ENCODE measurements at regions of chr16 and their contacts with region 1.

Region 1: DNA sequence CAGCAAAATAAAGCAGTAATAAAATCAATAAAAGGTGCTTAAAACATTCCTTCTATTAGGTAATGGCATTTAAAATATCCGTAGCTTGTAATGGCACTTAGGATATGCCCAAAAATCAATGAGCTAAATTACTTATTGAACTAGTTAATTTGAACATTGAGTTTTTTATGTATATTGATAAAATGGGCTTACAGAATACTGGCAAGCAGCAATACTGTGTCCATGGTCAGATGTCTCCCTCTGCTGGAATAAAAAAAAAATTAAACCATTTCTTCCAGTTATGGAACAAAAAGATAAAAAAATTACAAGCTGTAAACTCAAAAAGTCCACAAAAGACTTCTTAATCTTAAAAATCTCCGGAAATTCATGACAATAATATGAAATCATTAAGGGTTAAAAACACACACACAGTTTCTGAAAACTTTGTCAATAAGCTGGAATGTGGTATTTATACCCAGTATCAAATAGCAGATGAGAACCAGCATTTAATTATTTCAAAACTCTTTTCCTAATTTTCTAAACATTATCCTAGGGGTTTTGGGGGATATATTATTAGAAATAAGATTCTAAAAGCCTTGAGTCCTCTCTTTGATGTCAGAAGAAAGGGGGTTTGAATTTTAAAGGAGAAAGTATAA is 21.5 kb upstream of the PSMD7 start:
- DNase-seq: peak; percentile 13
- ATAC-seq: peak; percentile 44; the same call in 1 of the 2 replicates
- H3K4me3 ChIP-seq: no peak overlapping the region
- H3K27ac ChIP-seq: no peak overlapping the region
- H3K4me1 ChIP-seq: no peaks in the 10 kb centered on the region
- H3K27me3 ChIP-seq: peaks cover 26% of the 10 kb centered on the region
- CTCF ChIP-seq: peak; percentile 44 to 76 (median 51); a peak in 5 of 6 replicates
- POLR2A ChIP-seq: no peak
- RAD21 ChIP-seq: peak; percentile 71

Region 2: GRCh38 chr16:72501739-72502593 is 1773.2 kb before region 1 on chr16:
- CTCF ChIA-PET with region 1: interaction called, 3 read pairs
- POLR2A ChIA-PET with region 1: no interaction called
- RAD21 ChIA-PET with region 1: no interaction called
- intact Hi-C with region 1: loop called (anchors 10 kb)
- DNase-seq: peak; percentile 56
- ATAC-seq: peak; percentile 93
- H3K4me3 ChIP-seq: no peak overlapping the region
- H3K27ac ChIP-seq: no peak overlapping the region
- H3K4me1 ChIP-seq: no peaks in the 10 kb centered on the region
- H3K27me3 ChIP-seq: no peaks in the 10 kb centered on the region
- CTCF ChIP-seq: peak; percentile 71 to 93 (median 85); a peak in 5 of 6 replicates
- POLR2A ChIP-seq: no peak
- RAD21 ChIP-seq: peak; percentile 93

Region 3: GRCh38 chr16:73713778-73714495 is 561.2 kb before region 1 on chr16:
- CTCF ChIA-PET with region 1: no interaction called
- POLR2A ChIA-PET with region 1: no interaction called
- RAD21 ChIA-PET with region 1: no interaction called
- intact Hi-C with region 1: loop called (anchors 1 kb)
- DNase-seq: peak; percentile 27
- ATAC-seq: peak; percentile 80
- H3K4me3 ChIP-seq: no peak overlapping the region
- H3K27ac ChIP-seq: no peak overlapping the region
- H3K4me1 ChIP-seq: no peaks in the 10 kb centered on the region
- H3K27me3 ChIP-seq: peaks cover 28% of the 10 kb centered on the region; the same call in 1 of the 2 replicates
- CTCF ChIP-seq: peak; percentile 29 to 75 (median 69); a peak in 4 of 6 replicates
- POLR2A ChIP-seq: no peak
- RAD21 ChIP-seq: peak; percentile 51

Region 4: DNA sequence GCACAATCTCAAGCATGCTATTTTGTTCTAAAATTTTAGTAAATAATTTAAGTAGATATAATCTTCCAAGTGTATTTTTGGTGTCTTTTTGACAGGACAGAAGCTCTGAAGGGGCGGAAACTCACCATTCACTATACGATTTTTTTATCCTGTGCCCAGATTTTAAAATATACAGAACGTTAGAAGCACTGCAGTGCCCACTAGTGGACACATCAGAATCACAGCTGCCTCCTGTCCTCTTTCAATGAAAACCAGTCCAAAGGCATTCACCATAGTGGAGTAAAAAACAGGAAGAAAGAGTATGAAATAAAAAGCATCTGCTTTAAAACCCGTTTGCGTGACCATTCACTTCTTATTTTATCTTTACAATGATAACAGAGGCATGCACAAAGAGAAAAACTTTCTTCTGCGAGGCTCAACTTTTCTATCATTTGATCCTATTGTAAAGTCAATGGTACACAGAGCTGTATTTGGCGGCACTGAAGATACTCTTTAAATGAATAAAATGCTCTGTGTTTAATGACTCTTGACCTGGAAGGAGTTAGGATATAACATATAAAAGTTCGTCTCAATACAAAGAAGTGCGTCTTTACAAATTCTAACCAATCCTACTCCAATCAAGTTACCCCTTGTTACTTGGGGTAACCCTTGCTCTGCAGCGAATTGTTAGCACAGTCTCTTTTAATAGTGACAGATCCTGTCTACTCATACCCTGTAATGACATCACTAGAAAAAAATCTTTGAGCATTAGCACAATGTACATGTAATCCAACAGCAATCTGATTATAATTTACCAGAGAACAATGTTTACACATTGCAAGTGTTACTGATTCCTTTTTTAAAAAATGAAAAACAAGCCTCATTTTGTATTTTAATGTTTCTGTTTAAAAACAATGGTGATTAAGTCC is 318.3 kb before region 1 on chr16:
- CTCF ChIA-PET with region 1: interaction called, 4 read pairs
- POLR2A ChIA-PET with region 1: no interaction called
- RAD21 ChIA-PET with region 1: no interaction called
- intact Hi-C with region 1: loop called (anchors 5 kb)
- DNase-seq: peak; percentile 32
- ATAC-seq: peak; percentile 71
- H3K4me3 ChIP-seq: no peak overlapping the region
- H3K27ac ChIP-seq: no peak overlapping the region
- H3K4me1 ChIP-seq: no peaks in the 10 kb centered on the region
- H3K27me3 ChIP-seq: peaks cover 32% of the 10 kb centered on the region; the same call in 1 of the 2 replicates
- CTCF ChIP-seq: peak; percentile 53 to 87 (median 82); a peak in 5 of 6 replicates
- POLR2A ChIP-seq: no peak
- RAD21 ChIP-seq: peak; percentile 66

Region 5: GRCh38 chr16:74034862-74035261 is 240.3 kb before region 1 on chr16:
- CTCF ChIA-PET with region 1: interaction called, 10 read pairs
- POLR2A ChIA-PET with region 1: no interaction called
- RAD21 ChIA-PET with region 1: no interaction called
- intact Hi-C with region 1: no loop called
- DNase-seq: peak; percentile 1
- ATAC-seq: peak; percentile 57; the same call in 1 of the 2 replicates
- H3K4me3 ChIP-seq: no peak overlapping the region
- H3K27ac ChIP-seq: no peak overlapping the region
- H3K4me1 ChIP-seq: no peaks in the 10 kb centered on the region
- H3K27me3 ChIP-seq: peaks cover 54% of the 10 kb centered on the region
- CTCF ChIP-seq: peak in 2 of 3 experiments; percentile 28 to 48; a peak in 4 of 6 replicates
- POLR2A ChIP-seq: no peak
- RAD21 ChIP-seq: peak; percentile 48

Region 6: DNA sequence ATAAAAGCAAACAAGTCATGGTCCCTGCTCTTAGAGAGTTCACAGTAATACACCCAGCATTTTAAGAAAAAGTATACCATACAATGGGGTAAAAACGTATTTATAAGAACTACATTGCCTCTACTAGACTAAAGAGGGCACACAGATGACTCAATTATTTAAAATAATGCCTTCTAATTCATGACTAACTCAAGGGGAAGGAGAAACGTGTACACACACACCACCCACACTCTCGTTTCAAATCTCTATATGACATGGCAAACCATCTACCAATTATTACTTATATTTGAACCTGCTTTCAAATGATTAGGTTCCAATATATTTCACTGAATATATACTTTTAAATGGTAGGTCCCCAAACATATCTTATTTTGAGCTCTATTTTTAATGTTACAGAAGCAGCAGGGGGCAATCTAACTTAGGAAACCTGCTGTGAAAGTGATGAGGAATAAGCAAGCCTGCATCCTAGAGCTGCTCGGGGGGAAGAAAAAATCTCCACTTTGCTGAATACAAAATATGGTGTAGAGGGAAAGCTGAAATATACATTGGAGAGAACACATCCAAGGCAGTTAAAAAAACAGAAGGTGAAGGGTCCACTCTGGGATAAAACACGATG is 210.9 kb before region 1 on chr16:
- CTCF ChIA-PET with region 1: interaction called, 10 read pairs
- POLR2A ChIA-PET with region 1: no interaction called
- RAD21 ChIA-PET with region 1: no interaction called
- intact Hi-C with region 1: no loop called
- DNase-seq: no peak
- ATAC-seq: no peak
- H3K4me3 ChIP-seq: no peak overlapping the region
- H3K27ac ChIP-seq: no peak overlapping the region
- H3K4me1 ChIP-seq: no peaks in the 10 kb centered on the region
- H3K27me3 ChIP-seq: peaks cover 61% of the 10 kb centered on the region
- CTCF ChIP-seq: peak in 1 of 3 experiments; percentile 10; a peak in 1 of 6 replicates
- POLR2A ChIP-seq: no peak
- RAD21 ChIP-seq: peak; percentile 27; the same call in 1 of the 2 replicates

Region 7: DNA sequence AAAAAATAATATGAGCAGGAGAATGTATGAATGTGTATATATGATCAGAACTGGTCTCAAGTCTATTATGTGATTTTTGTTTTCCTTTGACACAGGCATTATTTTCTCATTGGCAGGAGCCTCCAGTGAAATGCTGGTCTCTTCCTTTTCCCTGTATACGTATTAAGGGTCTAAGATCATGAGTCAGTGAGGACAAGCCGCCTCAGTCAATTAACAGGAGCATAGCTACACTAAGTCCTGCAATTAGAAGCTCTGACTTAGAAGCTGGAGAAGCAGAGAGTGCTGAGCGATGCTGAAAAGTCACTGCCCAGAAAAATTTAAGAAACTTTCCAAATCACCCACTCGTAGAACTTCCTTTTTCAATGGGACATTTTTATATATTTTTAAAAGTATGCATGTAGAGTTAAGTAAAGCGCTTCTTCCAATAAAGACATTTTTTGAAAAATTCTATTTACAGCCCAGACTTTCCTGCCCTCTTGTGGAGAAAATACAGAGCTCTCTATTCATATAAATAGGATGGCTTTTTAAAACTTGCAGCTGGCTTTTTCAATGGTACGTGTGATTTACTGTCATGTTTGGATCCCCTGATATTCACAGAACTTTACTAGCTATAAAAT is 48.7 kb before region 1 on chr16:
- CTCF ChIA-PET with region 1: interaction called, 13 read pairs
- POLR2A ChIA-PET with region 1: no interaction called
- RAD21 ChIA-PET with region 1: no interaction called
- intact Hi-C with region 1: no loop called
- DNase-seq: peak; percentile 16
- ATAC-seq: peak; percentile 61
- H3K4me3 ChIP-seq: no peak overlapping the region
- H3K27ac ChIP-seq: no peak overlapping the region
- H3K4me1 ChIP-seq: no peaks in the 10 kb centered on the region
- H3K27me3 ChIP-seq: peaks cover 18% of the 10 kb centered on the region
- CTCF ChIP-seq: peak; percentile 36 to 61 (median 48); a peak in 4 of 6 replicates
- POLR2A ChIP-seq: no peak
- RAD21 ChIP-seq: peak; percentile 63